Panc1 (cell line): ENCODE measurements at regions of chr12 and their contacts with region 1.

Region 1: DNA sequence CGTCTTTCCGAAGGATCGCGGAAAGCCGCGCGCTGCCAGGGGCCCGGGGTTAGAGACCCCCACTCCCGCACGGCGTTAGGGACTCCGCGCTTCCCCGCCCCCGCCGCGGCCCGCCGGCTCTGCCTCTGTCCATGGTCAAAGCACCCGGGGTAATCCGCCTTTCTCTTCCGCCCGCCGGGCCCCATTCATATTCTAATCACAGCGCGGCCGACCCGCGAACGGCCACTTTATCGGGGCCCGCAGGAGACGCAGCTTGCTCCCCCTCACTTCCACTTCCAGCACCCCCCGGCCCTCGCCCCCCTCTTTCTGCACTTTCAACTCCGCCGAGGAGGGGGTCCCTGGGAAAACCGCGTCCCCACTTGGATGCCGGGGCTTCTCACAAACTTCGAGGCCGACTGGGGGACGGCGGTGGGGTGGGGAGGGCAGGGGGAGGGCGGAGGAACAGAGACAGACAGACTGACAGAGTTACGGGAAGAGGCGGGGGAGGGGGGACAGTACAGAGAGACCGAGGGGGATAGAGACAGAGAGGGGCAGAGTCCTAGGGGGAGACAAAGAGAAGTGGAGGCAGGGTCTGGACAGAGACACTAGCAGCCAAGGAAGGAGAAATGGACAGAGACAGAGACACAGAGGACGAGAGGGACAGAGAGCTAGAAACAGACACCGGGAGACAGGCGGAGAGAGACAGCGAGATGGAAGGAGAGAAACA is 1.1 kb upstream of the RFX4 start:
- DNase-seq: no peak
- ATAC-seq: peak; percentile 50; the same call in 1 of the 2 replicates
- H3K4me3 ChIP-seq: peak overlapping the region in 1 of 2 experiments; percentile 16; a peak in 2 of 4 replicates
- H3K27ac ChIP-seq: no peak overlapping the region
- H3K4me1 ChIP-seq: peaks cover 18% of the 10 kb centered on the region
- H3K27me3 ChIP-seq: peaks cover 40% of the 10 kb centered on the region
- CTCF ChIP-seq: no peak

Region 2: DNA sequence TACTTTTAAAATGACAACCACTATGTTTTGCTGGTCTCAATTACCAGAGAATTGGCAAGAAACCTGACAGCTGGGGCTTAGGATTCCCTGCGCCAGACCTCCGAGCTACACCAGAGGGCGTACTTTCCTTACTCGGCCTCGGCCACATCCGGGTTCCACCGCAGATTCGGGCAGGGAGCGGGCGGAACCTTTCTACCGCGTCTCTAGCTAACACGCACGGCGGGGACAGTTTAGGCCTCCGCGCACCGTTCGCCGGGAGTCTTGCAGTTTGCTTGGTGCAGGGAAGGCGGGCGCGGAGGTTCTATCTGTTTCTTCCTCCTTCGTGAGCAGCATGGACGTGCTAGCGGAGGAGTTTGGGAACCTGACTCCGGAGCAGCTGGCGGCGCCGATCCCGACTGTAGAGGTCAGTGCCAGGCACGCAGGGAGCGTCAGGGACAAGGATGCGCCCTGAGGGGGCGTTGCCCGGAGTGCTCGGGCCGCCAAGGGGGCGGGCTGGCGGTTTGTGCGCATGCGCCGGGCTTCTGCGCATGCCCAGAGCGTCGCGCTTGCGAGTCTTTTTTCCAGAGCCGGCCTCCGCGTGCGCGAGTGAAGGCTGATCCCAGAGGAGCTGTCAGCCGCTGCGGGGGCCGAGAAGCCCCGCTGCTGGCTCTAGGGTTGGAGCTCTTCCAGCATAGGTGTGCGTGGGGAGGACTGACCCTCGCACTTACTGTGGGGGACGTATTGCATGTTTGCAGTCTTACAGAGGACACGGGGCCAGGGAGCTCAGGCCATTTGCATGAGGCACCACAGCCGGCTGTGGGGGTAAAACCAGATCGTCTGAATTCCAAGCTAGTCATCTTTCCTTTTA is 223.9 kb before region 1 on chr12 and contains the start of gene POLR3B:
- CTCF ChIA-PET with region 1: no interaction called
- POLR2A ChIA-PET with region 1: no interaction called
- in situ Hi-C with region 1: no loop called
- intact Hi-C with region 1: no loop called
- DNase-seq: peak; percentile 79
- ATAC-seq: peak; percentile 96
- H3K4me3 ChIP-seq: peak within 1 kb of the TSS; percentile 74 to 92
- H3K27ac ChIP-seq: peak within 1 kb of the TSS; percentile 84
- H3K4me1 ChIP-seq: peaks cover 9% of the 10 kb centered on the region; the same call in 1 of the 2 replicates
- H3K27me3 ChIP-seq: 0 out of 2 replicates have a peak, but pooled peaks cover 2% of the 10 kb centered on the region
- CTCF ChIP-seq: peak; percentile 94
- total RNA-seq, gene POLR3B: 8.2 TPM

Region 3: GRCh38 chr12:106386813-106387535 is 194.7 kb before region 1 on chr12:
- CTCF ChIA-PET with region 1: no interaction called
- POLR2A ChIA-PET with region 1: no interaction called
- in situ Hi-C with region 1: no loop called
- intact Hi-C with region 1: loop called (anchors 10 kb)
- DNase-seq: no peak
- ATAC-seq: no peak
- H3K4me3 ChIP-seq: no peak overlapping the region
- H3K27ac ChIP-seq: no peak overlapping the region
- H3K4me1 ChIP-seq: no peaks in the 10 kb centered on the region
- H3K27me3 ChIP-seq: no peaks in the 10 kb centered on the region
- CTCF ChIP-seq: no peak

Region 4: DNA sequence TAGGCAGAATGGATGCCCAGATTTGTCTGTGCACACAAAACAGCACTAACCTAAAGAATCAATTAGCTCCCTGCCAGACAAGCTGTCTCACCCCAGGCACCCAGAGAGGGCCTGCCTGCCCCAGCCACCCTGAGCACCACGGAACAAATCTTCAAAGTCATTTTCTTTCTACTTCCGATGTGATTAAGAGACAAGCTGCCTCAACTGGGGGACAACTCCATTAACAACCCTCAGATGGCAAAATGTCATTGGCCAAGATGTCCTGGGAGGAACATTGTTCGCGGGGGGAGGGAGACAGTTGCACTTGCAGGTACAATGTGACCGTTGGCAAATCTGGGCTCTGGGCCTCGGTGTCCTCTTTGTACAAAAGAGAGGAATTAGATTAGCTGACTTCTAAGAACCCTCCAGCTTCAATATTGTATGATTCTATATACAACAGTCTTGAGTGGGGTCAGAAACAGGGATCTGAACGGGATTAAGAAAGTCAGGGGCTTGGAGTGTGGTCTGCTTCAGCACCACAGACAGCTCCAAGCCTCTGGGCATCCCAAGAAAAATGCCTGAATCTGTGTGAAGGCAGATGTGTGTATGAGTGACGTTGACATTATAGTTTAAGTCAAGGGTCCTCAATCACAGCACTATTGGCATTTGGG is 1800.2 kb after region 1 on chr12:
- CTCF ChIA-PET with region 1: no interaction called
- POLR2A ChIA-PET with region 1: no interaction called
- in situ Hi-C with region 1: no loop called
- intact Hi-C with region 1: no loop called
- DNase-seq: no peak
- ATAC-seq: no peak
- H3K4me3 ChIP-seq: no peak overlapping the region
- H3K27ac ChIP-seq: no peak overlapping the region
- H3K4me1 ChIP-seq: no peaks in the 10 kb centered on the region
- H3K27me3 ChIP-seq: no peaks in the 10 kb centered on the region
- CTCF ChIP-seq: no peak